Right ventricle myocardium inferior (tissue), 1 donor: ENCODE measurements at regions of chr10 and their contacts with region 1.

Region 1: GRCh38 chr10:125118011-125118611 is 42.3 kb downstream of the CTBP2 start:
- DNase-seq: no peak
- ATAC-seq: peak; percentile 45

Region 2: GRCh38 chr10:125152450-125153368 is 34.6 kb after region 1 on chr10:
- intact Hi-C with region 1: loop called (anchors 5 kb)
- DNase-seq: peak; percentile 75
- ATAC-seq: peak; percentile 83